ENCODE measurements at regions of chr5 and their contacts with region 1.

Region 1: DNA sequence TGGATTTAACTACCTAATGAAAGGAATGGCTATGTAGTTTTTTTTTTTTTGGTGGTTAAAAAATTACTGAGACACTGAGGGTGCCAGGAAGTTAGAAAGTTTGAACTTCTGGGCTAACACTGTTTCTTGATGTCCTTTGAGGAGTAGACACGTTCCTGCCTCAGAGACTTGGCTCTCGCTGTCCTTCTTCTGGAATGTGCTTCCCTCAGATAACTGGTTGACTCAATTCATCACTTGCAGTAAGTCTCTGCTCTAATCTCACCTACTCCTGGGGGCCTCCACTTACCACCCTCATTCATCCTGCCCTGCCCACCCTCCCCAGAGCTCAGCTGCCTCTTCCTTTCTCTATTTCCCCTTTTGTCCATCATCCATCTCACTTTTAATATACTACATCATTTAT is 167.0 kb downstream of the YTHDC2 start:
- DNase-seq: no peak
- H3K4me3 ChIP-seq: no peak overlapping the region
- H3K27ac ChIP-seq: no peak overlapping the region
- H3K4me1 ChIP-seq: no peaks in the 10 kb centered on the region
- H3K27me3 ChIP-seq: no peaks in the 10 kb centered on the region
- CTCF ChIP-seq: no peak
- POLR2A ChIP-seq: no peak

Region 2: DNA sequence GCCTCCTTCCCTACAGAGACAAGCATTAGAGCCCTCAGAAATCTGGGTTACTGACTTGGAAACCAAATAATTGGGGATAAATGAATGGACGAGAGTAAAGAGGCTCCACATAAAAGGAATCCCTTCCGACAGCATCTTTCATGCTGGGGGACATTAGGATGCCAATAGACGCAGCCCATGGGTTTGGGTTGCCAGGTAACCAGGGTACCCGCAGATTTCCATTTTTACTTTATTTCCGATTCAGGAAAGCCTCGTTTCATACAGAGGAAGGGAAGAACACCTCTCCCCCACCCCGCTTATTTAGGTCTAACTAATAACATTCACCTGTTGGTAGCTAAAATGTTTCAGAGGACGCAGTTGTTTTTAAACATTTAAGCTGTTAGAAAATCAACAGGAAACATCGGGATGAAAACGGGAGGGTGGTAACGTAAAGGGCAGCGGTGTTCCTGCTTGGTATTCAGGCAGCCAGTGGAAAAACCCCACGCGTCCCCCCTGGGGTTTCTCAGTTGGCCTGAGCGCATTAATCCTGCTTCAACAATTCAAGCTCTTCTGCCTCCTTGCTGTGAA is 12.4 kb after region 1 on chr5:
- intact Hi-C with region 1: no loop called
- DNase-seq: no peak
- H3K4me3 ChIP-seq: no peak overlapping the region
- H3K27ac ChIP-seq: no peak overlapping the region
- H3K4me1 ChIP-seq: no peaks in the 10 kb centered on the region
- H3K27me3 ChIP-seq: peaks cover 0 to 15% of the 10 kb centered on the region in 2 donors
- CTCF ChIP-seq: no peak
- POLR2A ChIP-seq: no peak

Region 3: DNA sequence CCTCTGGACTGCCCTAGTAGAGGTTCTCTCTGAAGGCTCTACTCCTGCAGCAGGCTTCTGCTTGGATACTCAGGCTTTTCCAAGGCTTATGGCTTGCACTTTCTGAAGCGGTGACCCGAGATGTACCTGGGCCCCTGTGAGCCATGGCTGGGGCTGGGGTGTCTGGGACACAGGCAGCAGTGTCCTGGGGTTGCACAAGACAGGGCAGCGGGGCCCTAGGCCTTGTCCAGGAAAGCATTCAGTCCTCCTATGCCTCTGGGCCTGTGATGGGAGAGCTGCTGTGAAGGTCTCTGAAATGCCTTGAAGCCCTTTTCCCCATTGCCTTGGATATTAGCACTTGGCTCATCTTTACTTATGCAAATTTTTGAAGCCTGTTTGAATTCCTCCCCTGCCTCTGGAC is 25.1 kb after region 1 on chr5:
- intact Hi-C with region 1: loop called (anchors 2 kb)
- DNase-seq: no peak
- H3K4me3 ChIP-seq: no peak overlapping the region
- H3K27ac ChIP-seq: no peak overlapping the region
- H3K4me1 ChIP-seq: no peaks in the 10 kb centered on the region
- H3K27me3 ChIP-seq: no peaks in the 10 kb centered on the region
- CTCF ChIP-seq: no peak
- POLR2A ChIP-seq: no peak

Measured in breast epithelium (tissue), 4 donors.